Mammary epithelial cell (primary cell): ENCODE measurements at regions of chr10 and their contacts with region 1.

Region 1: GRCh38 chr10:106436123-106436740 is 728.3 kb downstream of the SORCS1 start:
- DNase-seq: peak; percentile 92
- H3K4me3 ChIP-seq: no peak overlapping the region
- H3K27ac ChIP-seq: peak overlapping the region; percentile 100
- H3K4me1 ChIP-seq: peaks cover 56% of the 10 kb centered on the region
- H3K27me3 ChIP-seq: no peaks in the 10 kb centered on the region
- CTCF ChIP-seq: no peak

Region 2: GRCh38 chr10:106401161-106401560 is 35.1 kb before region 1 on chr10:
- CTCF ChIA-PET with region 1: no interaction called
- dilution Hi-C with region 1: no loop called
- in situ Hi-C with region 1: no loop called
- intact Hi-C with region 1: loop called (anchors 1 kb)
- DNase-seq: peak; percentile 26
- H3K4me3 ChIP-seq: no peak overlapping the region
- H3K27ac ChIP-seq: no peak overlapping the region
- H3K4me1 ChIP-seq: peaks cover 10% of the 10 kb centered on the region
- H3K27me3 ChIP-seq: no peaks in the 10 kb centered on the region
- CTCF ChIP-seq: peak; percentile 40 to 54

Region 3: GRCh38 chr10:106424076-106424475 is 12.2 kb before region 1 on chr10:
- CTCF ChIA-PET with region 1: interaction called, 3 read pairs
- dilution Hi-C with region 1: no loop called
- in situ Hi-C with region 1: no loop called
- intact Hi-C with region 1: loop called (anchors 1 kb)
- DNase-seq: peak; percentile 95
- H3K4me3 ChIP-seq: no peak overlapping the region
- H3K27ac ChIP-seq: peak overlapping the region; percentile 97
- H3K4me1 ChIP-seq: peaks cover 21% of the 10 kb centered on the region
- H3K27me3 ChIP-seq: no peaks in the 10 kb centered on the region
- CTCF ChIP-seq: no peak

Region 4: DNA sequence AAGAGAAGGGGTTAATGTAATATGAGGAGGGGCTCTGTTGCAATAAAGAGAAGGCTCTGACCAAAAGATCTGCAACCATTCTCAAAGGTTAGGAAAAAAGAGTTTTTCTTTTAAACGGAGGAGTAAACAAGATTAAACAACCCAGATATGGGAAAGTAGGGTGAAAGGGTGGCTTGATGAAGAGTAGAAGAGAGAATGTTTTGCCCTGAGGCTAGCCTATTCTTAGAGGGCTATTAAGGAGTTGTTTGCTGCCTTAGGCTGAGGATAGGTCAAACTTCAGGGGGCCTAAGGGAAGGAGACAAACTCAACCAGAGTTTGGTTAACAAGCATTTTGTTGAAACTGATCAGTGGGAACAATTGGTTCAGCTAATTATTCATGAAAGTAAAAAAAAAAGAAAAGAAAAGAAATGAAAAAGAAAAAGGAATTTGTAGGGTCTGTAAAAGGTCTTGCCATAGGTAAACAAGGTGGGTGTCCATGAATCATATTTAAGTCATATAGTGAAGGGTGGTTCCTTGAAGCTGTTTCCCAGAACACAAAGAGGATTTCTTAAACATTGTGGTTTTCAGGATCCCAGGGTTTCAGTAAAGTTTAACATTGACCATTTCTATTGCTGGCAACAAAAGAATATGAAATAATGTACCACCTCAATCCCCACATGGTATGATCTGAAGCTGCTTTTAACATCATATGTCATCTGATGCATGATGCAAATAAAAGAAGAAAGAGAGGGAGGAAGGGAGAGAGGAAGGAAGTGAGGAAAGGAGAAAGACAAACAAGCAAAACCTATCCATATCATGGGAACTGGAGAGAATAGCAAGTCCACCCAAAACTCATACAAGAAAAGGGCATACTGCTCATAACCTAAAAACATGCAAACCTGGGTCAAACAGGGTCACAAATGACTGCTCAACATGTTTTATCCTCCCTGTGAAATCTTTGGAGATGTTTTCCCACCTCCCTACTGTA is 64.6 kb after region 1 on chr10:
- CTCF ChIA-PET with region 1: no interaction called
- dilution Hi-C with region 1: loop called (anchors 5 kb)
- in situ Hi-C with region 1: no loop called
- intact Hi-C with region 1: loop called (anchors 5 kb)
- DNase-seq: peak; percentile 62
- H3K4me3 ChIP-seq: no peak overlapping the region
- H3K27ac ChIP-seq: peak overlapping the region; percentile 67
- H3K4me1 ChIP-seq: peaks cover 32% of the 10 kb centered on the region
- H3K27me3 ChIP-seq: no peaks in the 10 kb centered on the region
- CTCF ChIP-seq: no peak

Region 5: DNA sequence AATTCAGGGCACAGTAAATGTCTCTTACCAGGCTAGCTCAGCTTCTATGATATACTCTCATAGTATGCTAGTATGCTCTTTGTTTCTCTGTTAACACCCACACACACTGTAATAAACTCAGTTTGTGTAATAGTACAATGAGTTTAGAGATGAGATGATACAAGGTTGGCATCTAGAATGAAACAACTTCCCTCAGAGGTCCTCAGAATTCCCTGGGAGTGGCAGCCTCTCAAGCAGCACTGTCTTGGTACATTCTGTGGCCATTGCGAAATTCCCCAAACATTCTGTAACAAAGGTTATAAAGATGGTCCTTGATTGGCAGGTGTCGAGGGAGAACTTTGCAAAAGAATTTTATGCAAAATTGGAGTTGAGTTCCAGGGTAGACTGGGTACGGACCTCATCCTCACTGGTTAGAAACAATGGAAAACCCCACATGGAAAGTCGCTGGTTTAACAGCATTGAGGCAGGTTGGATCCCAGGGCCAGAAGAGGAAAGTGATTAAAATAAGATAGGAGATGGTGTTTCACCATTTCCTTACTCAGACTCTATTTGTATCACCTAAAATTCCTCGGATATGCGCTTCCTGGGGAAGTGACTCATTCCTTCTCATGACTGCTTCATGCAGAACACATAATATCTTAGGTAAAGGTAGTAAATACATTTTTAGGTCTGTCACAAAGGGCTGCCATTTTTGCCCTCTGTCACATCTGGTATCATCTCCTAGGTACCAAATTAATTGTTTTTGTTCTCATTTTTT is 70.5 kb after region 1 on chr10:
- CTCF ChIA-PET with region 1: no interaction called
- dilution Hi-C with region 1: loop called (anchors 5 kb)
- in situ Hi-C with region 1: no loop called
- intact Hi-C with region 1: loop called (anchors 5 kb)
- DNase-seq: peak; percentile 84
- H3K4me3 ChIP-seq: no peak overlapping the region
- H3K27ac ChIP-seq: peak overlapping the region; percentile 92
- H3K4me1 ChIP-seq: peaks cover 31% of the 10 kb centered on the region
- H3K27me3 ChIP-seq: no peaks in the 10 kb centered on the region
- CTCF ChIP-seq: no peak

Region 6: DNA sequence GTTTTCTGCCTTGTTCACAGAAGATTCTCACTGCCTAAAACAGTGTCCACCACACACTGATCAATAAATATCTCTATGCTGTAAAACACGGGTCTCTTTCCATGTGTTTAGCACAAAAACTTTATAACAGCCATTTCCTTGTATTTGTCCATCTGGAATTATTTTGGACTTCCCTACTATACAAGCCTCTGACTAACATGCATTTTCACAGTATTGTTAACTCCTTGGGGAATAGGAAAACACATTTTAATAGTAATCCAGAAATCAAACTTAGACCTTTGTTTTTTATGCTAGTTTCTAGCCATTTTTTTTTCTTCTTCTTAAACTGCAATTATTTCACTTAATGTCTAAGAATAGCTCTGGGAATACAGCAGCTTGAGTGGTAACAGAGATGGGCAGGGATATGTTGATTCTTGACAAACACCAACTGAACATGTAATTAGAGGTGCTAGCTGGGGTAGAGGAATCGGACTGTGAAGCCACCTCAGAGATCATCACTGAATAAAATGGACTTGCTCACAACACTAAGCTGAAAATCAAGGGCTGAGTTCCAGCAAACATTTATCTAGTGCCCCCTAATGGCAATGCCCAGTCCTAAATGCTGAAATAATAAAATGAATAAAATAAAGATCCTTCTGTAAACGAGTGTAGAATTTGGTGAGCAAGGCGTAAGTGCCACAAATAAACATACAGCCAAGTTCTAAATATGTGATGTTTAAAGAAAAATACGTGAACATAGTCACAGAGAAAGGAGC is 135.1 kb after region 1 on chr10:
- CTCF ChIA-PET with region 1: interaction called, 3 read pairs
- dilution Hi-C with region 1: no loop called
- in situ Hi-C with region 1: no loop called
- intact Hi-C with region 1: loop called (anchors 1 kb)
- DNase-seq: peak; percentile 57
- H3K4me3 ChIP-seq: no peak overlapping the region
- H3K27ac ChIP-seq: peak overlapping the region; percentile 3
- H3K4me1 ChIP-seq: peaks cover 17% of the 10 kb centered on the region
- H3K27me3 ChIP-seq: no peaks in the 10 kb centered on the region
- CTCF ChIP-seq: peak; percentile 67 to 76

Region 7: DNA sequence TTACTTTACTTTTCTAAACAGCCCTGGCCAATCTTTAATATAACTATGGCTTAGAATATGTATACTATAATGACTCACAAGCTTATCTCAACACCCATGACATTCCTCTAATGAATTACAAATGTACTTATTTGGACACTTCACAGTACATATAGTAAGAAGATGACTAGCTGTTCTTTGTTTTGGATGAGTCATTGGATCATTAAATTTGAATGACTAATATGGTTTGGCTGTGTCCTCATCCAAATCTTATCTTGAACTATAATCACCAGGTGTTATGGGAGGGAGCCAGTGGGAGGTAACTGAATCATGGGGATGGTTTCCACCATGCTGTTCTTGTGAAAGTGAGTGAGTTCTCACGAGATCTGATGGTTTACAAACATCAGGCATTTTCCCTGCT is 1535.7 kb after region 1 on chr10:
- CTCF ChIA-PET with region 1: no interaction called
- dilution Hi-C with region 1: no loop called
- in situ Hi-C with region 1: no loop called
- intact Hi-C with region 1: loop called (anchors 5 kb)
- DNase-seq: peak; percentile 98
- H3K4me3 ChIP-seq: no peak overlapping the region
- H3K27ac ChIP-seq: peak overlapping the region; percentile 91
- H3K4me1 ChIP-seq: peaks cover 22% of the 10 kb centered on the region
- H3K27me3 ChIP-seq: no peaks in the 10 kb centered on the region
- CTCF ChIP-seq: no peak